Ovary (tissue), 10 donors: ENCODE measurements at regions of chr1 and their contacts with region 1.

Region 1: GRCh38 chr1:201888282-201889089 is at the start of gene SHISA4:
- DNase-seq: peak; percentile 57 to 77 (median 64)
- H3K4me3 ChIP-seq: peak within 1 kb of the TSS; percentile 57
- H3K27ac ChIP-seq: peak within 1 kb of the TSS; percentile 0 to 22
- H3K4me1 ChIP-seq: peaks cover 22% of the 10 kb centered on the region
- H3K27me3 ChIP-seq: no peaks in the 10 kb centered on the region
- CTCF ChIP-seq: no peak
- EP300 ChIP-seq: no peak
- POLR2A ChIP-seq: peak; percentile 23
- total RNA-seq, gene SHISA4: 16.8 to 37.9 (median 26.4) TPM

Region 2: DNA sequence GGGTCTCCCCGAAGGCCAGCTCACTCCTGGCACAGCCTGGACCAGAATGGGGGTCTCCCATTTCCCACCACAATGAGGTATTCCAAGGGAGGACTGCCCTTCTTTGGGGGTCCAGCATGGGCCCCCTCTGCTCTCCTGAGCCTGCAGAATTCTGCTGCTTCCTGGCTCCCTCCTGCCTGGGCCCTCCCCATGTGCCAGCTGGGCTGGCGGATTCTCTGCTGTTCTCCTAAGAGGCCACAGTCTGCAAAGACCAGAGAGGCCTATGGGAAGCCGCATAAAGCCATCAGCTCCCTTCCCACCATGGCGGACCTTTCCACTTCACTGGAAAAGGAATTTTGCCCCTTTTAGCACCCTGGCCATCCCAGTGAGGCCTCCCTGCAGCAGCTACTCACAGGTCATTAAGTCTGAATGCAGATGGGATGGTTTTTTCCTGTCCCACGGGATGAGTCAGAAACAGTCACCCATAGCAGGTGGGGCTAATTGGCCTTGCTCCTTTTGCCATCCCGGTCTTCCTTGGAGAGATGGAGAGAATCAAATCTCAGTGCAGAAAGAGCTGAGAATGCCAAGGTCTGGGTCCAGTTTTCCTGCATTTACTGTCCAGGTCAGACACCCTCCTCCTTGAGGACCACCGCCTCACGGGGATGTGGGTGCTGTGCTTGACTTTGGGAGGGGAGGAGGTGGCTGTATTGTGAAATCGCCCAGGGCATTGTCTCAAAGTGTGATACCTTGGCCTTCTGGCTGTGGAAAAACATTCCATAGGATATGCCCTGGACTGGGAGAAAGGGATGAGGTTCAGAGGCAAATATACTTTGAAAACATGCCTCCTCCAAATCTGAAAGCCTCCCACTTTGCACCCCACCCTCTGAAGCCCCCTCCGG is 1263.9 kb after region 1 on chr1:
- intact Hi-C with region 1: loop called in 1 of 4 experiments (anchors 5 kb)
- DNase-seq: no peak
- H3K4me3 ChIP-seq: no peak overlapping the region
- H3K27ac ChIP-seq: no peak overlapping the region
- H3K4me1 ChIP-seq: no peaks in the 10 kb centered on the region
- H3K27me3 ChIP-seq: no peaks in the 10 kb centered on the region
- CTCF ChIP-seq: no peak
- EP300 ChIP-seq: no peak
- POLR2A ChIP-seq: no peak